ENCODE measurements at regions of chr22 and their contacts with region 1.

Region 1: GRCh38 chr22:50612528-50613221 is 12.1 kb downstream of the MAPK8IP2 start:
- DNase-seq: peak in 1 of 2 experiments; percentile 66
- H3K4me3 ChIP-seq: no peak overlapping the region
- H3K27ac ChIP-seq: no peak overlapping the region
- H3K4me1 ChIP-seq: peaks cover 0 to 13% (median 2%) of the 10 kb centered on the region in 4 experiments; a peak in 4 of 7 replicates
- H3K27me3 ChIP-seq: peaks cover 0 to 9% (median 7%) of the 10 kb centered on the region in 4 experiments; a peak in 6 of 7 replicates
- CTCF ChIP-seq: no peak
- EP300 ChIP-seq: no peak
- POLR2A ChIP-seq: no peak
- RAD21 ChIP-seq: no peak

Region 2: GRCh38 chr22:50600967-50601668 is 11.6 kb before region 1 on chr22:
- CTCF ChIA-PET with region 1: interaction called, 13 read pairs
- POLR2A ChIA-PET with region 1: interaction called, 4 read pairs
- DNase-seq: peak in 1 of 2 experiments; percentile 60
- H3K4me3 ChIP-seq: peak overlapping the region; percentile 21 to 57 (median 26); a peak in 6 of 8 replicates
- H3K27ac ChIP-seq: no peak overlapping the region
- H3K4me1 ChIP-seq: peaks cover 0 to 16% (median 4%) of the 10 kb centered on the region in 4 experiments; a peak in 5 of 7 replicates
- H3K27me3 ChIP-seq: peaks cover 54 to 85% (median 63%) of the 10 kb centered on the region in 4 experiments; a peak in 6 of 7 replicates
- CTCF ChIP-seq: no peak
- EP300 ChIP-seq: no peak
- POLR2A ChIP-seq: no peak
- RAD21 ChIP-seq: no peak

Measured in H1 (cell line).